HEK293T (cell line): ENCODE measurements at regions of chr19 and their contacts with region 1.

Region 1: GRCh38 chr19:47243776-47244547 is 12.4 kb upstream of the CCDC9 start:
- DNase-seq: peak; percentile 88

Region 2: GRCh38 chr19:46924874-46925547 is 319.0 kb before region 1 on chr19:
- CTCF ChIA-PET with region 1: no interaction called
- POLR2A ChIA-PET with region 1: no interaction called
- DNase-seq: no peak

Region 3: GRCh38 chr19:47035127-47036096 is 208.6 kb before region 1 on chr19:
- CTCF ChIA-PET with region 1: no interaction called
- POLR2A ChIA-PET with region 1: no interaction called
- DNase-seq: peak; percentile 93

Region 4: GRCh38 chr19:47210689-47211316 is 33.2 kb before region 1 on chr19:
- CTCF ChIA-PET with region 1: interaction called, 108 read pairs
- POLR2A ChIA-PET with region 1: interaction called, 37 read pairs
- DNase-seq: peak; percentile 73

Region 5: DNA sequence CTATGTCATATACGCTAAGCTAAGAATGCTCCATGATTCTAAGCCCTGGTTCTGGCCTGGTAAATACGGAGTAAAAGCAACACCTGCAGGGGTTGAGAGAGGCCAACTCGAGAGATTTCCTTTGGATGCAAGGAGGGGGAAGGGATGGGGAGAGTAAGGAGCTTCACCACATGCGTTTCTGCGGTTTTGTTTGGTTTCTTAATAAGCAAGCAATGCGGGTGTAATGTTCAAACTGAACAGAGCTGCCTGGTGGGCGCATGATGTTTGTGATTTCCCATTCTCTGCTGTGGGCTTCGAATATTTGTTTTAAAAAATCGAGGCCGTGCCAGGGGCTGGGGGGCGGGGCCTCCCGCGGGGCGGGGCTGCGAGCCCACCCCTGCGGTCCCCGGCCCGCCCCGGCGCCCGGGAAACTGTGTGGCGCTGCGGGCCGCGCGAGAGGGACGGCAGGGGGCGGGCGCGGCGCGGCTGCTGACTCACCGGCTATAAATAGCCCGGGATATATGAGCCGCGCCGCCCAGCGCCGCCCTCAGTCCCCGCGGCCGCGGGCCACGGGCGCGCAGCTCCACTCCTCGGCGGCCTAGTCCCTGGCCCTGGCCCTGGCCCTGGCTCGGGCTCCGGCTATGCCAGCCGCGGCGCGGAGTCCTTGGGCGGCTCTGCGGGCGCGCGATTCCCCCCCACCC is 18.1 kb before region 1 on chr19:
- CTCF ChIA-PET with region 1: interaction called, 5 read pairs
- POLR2A ChIA-PET with region 1: interaction called, 42 read pairs
- DNase-seq: peak; percentile 96

Region 6: GRCh38 chr19:47231215-47231984 is 12.6 kb before region 1 on chr19:
- CTCF ChIA-PET with region 1: interaction called, 14 read pairs
- POLR2A ChIA-PET with region 1: interaction called, 42 read pairs
- DNase-seq: peak; percentile 82

Region 7: GRCh38 chr19:47256688-47257443 is 12.9 kb after region 1 on chr19:
- CTCF ChIA-PET with region 1: interaction called, 16 read pairs
- POLR2A ChIA-PET with region 1: interaction called, 18 read pairs
- DNase-seq: peak; percentile 97